ENCODE measurements at regions of chr11 and their contacts with region 1.

Region 1: GRCh38 chr11:86608251-86608799 is 64.1 kb downstream of the ME3 start:
- DNase-seq: peak; percentile 68 to 78
- H3K4me3 ChIP-seq: no peak overlapping the region
- H3K27ac ChIP-seq: peak overlapping the region in 1 of 3 donors; percentile 27
- H3K4me1 ChIP-seq: peaks cover 9 to 24% of the 10 kb centered on the region in 2 donors
- H3K27me3 ChIP-seq: no peaks in the 10 kb centered on the region
- CTCF ChIP-seq: peak; percentile 60 to 98 (median 90)
- POLR2A ChIP-seq: no peak

Region 2: GRCh38 chr11:86818466-86819192 is 210.3 kb after region 1 on chr11:
- intact Hi-C with region 1: loop called (anchors 10 kb)
- DNase-seq: peak in 1 of 2 donors; percentile 9
- H3K4me3 ChIP-seq: no peak overlapping the region
- H3K27ac ChIP-seq: no peak overlapping the region
- H3K4me1 ChIP-seq: peaks cover 0 to 7% of the 10 kb centered on the region in 2 donors
- H3K27me3 ChIP-seq: no peaks in the 10 kb centered on the region
- CTCF ChIP-seq: peak; percentile 34 to 89 (median 74)
- POLR2A ChIP-seq: no peak

Measured in thyroid gland (tissue), 4 donors.